Ascending aorta (tissue), 2 donors: ENCODE measurements at regions of chrX and their contacts with region 1.

Region 1: DNA sequence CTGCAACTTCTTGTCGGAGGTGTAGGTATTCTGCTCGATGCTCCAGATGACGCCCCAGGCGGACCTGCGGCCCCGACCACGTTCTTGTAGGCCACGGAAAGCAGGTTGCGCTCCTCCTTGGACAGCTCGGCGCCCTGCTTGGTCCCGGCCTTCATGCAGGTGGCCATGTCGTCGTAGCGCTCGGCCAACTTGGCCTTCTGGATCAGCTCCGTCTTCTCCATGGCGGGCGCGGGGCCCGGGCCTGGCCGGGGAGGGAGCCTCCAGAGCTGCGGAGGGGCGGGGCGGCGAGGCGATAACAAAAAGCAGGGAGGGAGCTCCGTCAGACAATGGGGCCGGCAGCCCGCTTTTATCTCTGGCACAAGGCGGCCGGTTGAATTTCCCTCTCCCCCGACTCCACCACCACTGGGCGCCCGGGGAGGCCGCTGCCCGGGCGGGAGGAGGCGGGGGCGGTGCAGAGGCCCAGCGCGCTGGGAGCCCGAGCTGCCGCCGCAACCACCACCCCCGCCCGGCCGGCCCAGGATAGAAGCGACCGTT is 28.3 kb upstream of the DRP2 start:
- DNase-seq: no peak
- H3K4me3 ChIP-seq: peak overlapping the region; percentile 39 to 60
- H3K27ac ChIP-seq: peak overlapping the region; percentile 58 to 74
- H3K4me1 ChIP-seq: no peaks in the 10 kb centered on the region
- H3K27me3 ChIP-seq: no peaks in the 10 kb centered on the region
- CTCF ChIP-seq: no peak

Region 2: DNA sequence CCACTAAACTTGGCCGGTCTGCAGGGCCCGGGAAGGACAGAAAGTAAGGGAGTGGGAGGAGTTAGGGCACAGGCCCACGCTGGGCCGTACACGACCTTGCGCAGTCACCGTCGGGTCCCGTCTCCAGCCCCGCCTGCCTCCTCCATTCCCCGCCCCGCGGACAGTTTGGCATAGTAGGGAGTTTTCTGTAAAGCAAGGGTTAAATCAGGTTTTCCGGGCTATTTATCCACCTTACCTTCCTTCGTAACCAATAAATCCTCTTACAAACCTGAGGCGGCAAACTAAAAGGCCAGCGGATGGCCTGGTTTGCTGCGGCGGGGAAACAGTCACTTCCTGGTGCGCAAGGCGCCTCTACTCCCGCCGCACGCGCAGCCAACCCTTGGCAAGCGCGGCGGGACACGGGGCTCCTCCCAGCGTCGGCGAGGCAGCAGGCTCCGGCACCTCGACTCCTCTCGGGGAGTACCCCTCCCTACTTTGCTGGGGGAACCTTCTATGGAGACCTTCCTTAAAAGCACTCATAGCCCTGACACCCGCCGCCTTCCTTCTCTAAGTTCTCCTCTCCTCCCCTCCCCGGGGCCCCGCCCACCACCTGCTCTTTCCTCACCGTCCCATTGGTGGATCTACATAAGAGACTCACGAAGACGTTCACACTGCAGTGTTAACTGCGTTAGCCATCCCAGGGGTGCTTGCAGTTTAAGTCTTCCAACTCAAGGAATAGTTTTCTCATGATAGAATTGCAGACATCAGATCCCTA is 139.6 kb before region 1 on chrX and contains the start of gene TRMT2B:
- intact Hi-C with region 1: loop called (anchors 5 kb)
- DNase-seq: peak; percentile 52 to 90
- H3K4me3 ChIP-seq: peak within 1 kb of the TSS; percentile 53 to 67
- H3K27ac ChIP-seq: peak within 1 kb of the TSS; percentile 71 to 88
- H3K4me1 ChIP-seq: peaks cover 0 to 3% of the 10 kb centered on the region in 2 donors
- H3K27me3 ChIP-seq: no peaks in the 10 kb centered on the region
- CTCF ChIP-seq: no peak
- total RNA-seq, gene TRMT2B: 4.5 TPM

Region 3: GRCh38 chrX:101097546-101098453 is 93.5 kb before region 1 on chrX and contains the start of gene CENPI:
- intact Hi-C with region 1: loop called (anchors 5 kb)
- DNase-seq: peak; percentile 83 to 95
- H3K4me3 ChIP-seq: peak within 1 kb of the TSS; percentile 46 to 55
- H3K27ac ChIP-seq: peak within 1 kb of the TSS; percentile 68 to 77
- H3K4me1 ChIP-seq: no peaks in the 10 kb centered on the region
- H3K27me3 ChIP-seq: no peaks in the 10 kb centered on the region
- CTCF ChIP-seq: no peak
- total RNA-seq, gene CENPI: not detected